ENCODE measurements at regions of chr1 and their contacts with region 1.

Region 1: DNA sequence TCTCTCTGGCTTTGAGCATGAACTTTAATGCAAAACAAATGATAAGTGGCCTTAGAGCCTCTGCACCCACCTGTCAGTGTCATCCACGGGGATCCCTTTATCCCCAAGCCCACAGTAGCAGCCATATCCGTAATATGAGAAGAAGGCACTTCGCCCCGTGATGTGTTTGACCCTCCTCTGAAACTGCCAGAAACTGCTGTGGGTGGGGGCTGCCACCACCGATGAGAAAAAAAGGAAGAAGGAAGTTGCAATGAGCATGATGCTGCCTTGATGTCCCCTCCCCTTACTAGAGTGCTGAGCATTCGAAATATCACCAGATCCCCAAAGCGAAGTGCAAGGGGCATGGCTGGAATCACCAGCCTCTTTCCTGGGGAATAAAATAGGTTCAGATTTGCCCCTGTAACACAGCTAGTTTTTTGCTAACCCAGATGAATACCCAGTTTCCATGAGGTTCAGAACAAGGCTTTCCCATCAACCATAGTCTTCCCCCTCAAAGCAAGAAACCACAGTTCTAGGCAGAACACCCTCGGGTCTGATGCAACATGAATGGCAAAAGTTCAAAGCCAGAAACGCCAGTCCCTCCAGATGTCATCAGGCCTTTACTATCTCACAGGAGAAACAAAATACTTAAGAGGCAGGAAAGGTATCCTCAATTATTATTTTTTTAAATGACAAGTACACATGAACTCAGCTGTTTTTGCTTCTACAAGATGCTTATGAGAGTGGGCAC is 10.8 kb upstream of the UBXN10 start:
- DNase-seq: no peak
- ATAC-seq: peak; percentile 11; the same call in 1 of the 3 replicates
- H3K4me3 ChIP-seq: no peak overlapping the region
- H3K27ac ChIP-seq: no peak overlapping the region
- H3K4me1 ChIP-seq: peaks cover 16 to 20% of the 10 kb centered on the region in 2 experiments
- H3K27me3 ChIP-seq: no peaks in the 10 kb centered on the region
- CTCF ChIP-seq: no peak
- EP300 ChIP-seq: no peak
- POLR2A ChIP-seq: no peak
- RAD21 ChIP-seq: no peak

Region 2: DNA sequence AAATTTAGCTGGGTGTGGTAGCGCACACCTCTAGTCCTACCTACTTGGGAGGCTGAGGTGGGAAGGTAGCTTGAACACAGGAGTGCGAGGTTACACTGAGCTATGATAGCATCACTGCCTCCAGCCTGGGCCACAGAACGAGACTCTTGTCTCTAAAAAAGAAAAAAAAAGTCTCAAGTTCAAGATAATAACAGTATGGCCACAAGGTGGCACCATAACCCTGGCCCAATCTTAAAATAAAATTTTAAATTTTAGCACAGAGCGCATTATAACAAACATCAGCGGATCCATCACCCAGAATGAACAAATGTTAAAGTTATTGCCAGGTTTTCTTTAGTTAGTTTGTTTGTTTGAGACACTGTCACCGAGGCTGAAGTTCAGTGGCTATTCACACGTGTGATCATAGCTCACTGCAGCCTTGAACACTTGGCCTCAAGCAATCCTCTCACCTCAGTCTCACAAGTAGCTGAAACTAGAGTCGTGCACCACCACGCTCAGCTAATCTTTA is 513.3 kb before region 1 on chr1:
- CTCF ChIA-PET with region 1: no interaction called
- POLR2A ChIA-PET with region 1: no interaction called
- in situ Hi-C with region 1: no loop called
- intact Hi-C with region 1: no loop called
- DNase-seq: peak in 2 of 4 experiments; percentile 28 to 65
- ATAC-seq: no peak
- H3K4me3 ChIP-seq: no peak overlapping the region
- H3K27ac ChIP-seq: no peak overlapping the region
- H3K4me1 ChIP-seq: peaks cover 0 to 25% of the 10 kb centered on the region in 2 experiments; a peak in 2 of 5 replicates
- H3K27me3 ChIP-seq: peaks cover 27 to 62% of the 10 kb centered on the region in 2 experiments; a peak in 4 of 5 replicates
- CTCF ChIP-seq: peak; percentile 63 to 89 (median 78)
- EP300 ChIP-seq: no peak
- POLR2A ChIP-seq: no peak
- RAD21 ChIP-seq: peak; percentile 53 to 75

Region 3: GRCh38 chr1:20185834-20186782 is 11.0 kb after region 1 on chr1 and contains the starts of genes PLA2G2C and UBXN10:
- CTCF ChIA-PET with region 1: no interaction called
- POLR2A ChIA-PET with region 1: interaction called, 15 read pairs
- in situ Hi-C with region 1: no loop called
- intact Hi-C with region 1: no loop called
- DNase-seq: peak; percentile 94 to 97 (median 96)
- ATAC-seq: peak; percentile 84
- H3K4me3 ChIP-seq: peak within 1 kb of the TSS; percentile 74
- H3K27ac ChIP-seq: peak within 1 kb of the TSS; percentile 95
- H3K4me1 ChIP-seq: peaks cover 69 to 72% of the 10 kb centered on the region in 2 experiments
- H3K27me3 ChIP-seq: no peaks in the 10 kb centered on the region
- CTCF ChIP-seq: peak in 1 of 3 experiments; percentile 5; a peak in 1 of 6 replicates
- EP300 ChIP-seq: peak; percentile 75
- POLR2A ChIP-seq: peak; percentile 59; the same call in 1 of the 2 replicates
- RAD21 ChIP-seq: no peak; a peak in 1 of 4 replicates
- polyA plus RNA-seq, gene PLA2G2C: 0.21 to 0.48 TPM
- polyA plus RNA-seq, gene UBXN10: 12.3 to 13.6 TPM

Region 4: DNA sequence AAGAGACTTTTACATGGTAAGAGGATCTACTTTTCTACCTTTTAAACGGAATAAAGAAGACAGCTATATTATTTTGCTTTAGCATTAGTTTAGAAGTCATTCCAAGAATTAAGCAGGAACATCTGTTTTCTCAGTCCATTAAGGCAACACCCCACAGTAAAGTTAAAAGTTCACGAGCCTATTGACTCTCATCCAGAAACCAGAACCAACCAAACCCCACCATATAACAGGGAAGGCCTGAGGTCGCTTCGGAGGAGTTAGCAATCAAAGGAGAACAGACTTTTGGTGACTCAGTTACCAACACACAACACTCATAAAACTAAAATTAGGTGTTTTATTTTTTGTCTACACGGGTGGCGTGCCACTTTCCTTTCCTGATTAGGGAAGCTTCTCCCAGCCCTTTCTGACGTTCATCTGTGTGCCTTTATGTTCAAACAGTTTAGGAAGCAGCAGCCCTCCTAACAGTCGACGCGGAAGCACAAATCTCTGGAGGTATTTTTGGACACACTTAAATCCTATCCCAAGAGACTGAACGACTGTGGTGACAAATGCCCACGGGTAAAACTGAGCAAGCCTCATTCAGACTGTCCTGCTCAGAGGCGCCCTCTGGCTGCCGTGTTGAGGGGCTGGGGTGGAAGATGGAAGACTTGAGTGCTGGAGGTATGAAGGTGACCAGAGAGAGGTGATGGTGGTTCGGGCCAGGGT is 19.8 kb after region 1 on chr1:
- CTCF ChIA-PET with region 1: no interaction called
- POLR2A ChIA-PET with region 1: interaction called, 10 read pairs
- in situ Hi-C with region 1: no loop called
- intact Hi-C with region 1: no loop called
- DNase-seq: peak; percentile 78 to 90 (median 78)
- ATAC-seq: peak; percentile 83
- H3K4me3 ChIP-seq: no peak overlapping the region
- H3K27ac ChIP-seq: no peak overlapping the region
- H3K4me1 ChIP-seq: peaks cover 31 to 59% of the 10 kb centered on the region in 2 experiments
- H3K27me3 ChIP-seq: no peaks in the 10 kb centered on the region
- CTCF ChIP-seq: peak; percentile 92 to 99 (median 92)
- EP300 ChIP-seq: 0 out of 2 replicates have a peak, but pooled peaks have one; percentile 21
- POLR2A ChIP-seq: no peak
- RAD21 ChIP-seq: peak; percentile 63 to 89

Measured in K562 (cell line).